Psoas muscle (tissue), 8 donors: ENCODE measurements at regions of chr11 and their contacts with region 1.

Region 1: DNA sequence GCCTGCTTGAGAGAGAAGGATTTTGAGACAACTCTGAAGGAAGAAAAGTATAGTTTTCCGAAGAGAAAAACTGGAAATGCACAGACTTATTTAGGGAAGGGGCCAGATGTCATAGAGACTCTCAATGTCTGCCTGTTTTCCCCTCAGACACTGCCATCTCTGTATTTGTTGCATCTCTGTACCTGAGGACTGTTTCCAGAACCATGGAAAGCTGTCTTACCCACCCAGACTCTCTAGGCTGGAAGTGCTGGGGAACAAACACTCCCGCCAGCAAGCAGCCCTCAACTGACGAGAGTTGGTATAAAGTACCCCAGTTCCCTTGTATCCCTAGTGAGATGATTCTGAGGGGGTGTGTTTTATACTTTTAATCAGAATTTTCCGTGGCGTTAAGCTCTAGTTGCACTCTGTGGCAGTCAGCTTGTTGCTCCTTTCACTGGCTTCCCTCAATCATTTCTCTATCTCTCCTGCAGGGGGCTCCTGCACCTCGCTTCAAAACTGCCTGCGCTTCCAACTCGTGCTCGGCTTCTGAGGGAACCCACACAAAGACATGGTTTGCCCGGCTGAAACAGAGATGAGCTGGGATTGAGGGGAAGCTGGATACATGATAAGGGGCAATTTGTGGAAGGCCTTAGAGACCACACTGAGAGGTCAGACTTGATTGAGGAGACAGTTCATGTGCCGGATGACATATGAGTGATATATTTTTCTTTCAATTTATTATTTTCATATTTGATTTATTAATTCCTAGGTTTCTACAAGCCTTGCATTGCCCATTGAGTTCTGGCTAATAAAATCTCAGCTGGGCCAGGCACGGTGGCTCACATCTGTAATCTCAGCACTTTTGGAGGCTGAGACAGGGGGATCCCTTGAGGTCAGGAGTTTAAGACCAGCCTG is 36.9 kb upstream of the CLPB start:
- DNase-seq: peak; percentile 51 to 71
- ATAC-seq: peak; percentile 75 to 84 (median 78)
- H3K4me3 ChIP-seq: no peak overlapping the region
- H3K27ac ChIP-seq: no peak overlapping the region
- H3K4me1 ChIP-seq: peaks cover 6% of the 10 kb centered on the region
- H3K27me3 ChIP-seq: no peaks in the 10 kb centered on the region
- CTCF ChIP-seq: peak; percentile 85

Region 2: DNA sequence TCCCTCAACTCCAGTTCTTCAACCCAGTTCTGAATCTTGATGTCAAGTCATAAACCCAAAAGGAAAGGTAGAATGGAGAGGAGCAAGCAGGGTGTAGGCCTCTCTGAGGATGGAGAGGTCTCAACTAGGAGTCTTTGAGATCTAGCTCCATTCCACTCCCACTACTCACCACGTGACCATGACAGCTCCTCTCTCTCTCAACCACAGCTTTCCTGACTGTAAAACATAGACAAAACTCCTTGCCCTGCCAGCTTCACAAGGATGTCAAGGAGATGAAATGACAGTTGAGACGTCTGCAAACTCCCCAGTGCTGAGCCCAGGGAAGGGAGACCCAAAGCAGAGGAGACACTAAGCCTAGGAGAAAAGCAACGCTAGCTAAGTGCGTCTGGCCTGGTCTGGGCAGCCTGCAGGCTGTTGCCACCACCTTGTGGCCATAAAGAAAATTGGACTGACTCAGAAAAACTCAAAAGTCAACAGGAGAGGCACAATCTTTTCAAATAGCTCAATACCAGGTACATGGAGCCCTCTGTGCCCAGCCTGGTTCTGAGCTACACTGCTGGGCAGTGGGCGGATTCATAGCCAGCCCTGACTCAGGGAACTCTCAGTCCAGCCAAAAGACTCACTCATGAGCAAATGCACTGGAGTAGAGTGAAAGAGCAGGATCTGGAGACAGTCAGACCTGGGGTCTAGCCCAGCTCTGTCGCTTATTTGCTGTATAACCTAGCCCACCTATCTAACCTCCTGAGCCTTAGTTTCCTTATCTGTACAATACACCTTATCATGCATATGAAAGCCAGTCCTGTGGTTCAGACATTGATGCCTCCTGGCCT is 40.3 kb before region 1 on chr11:
- intact Hi-C with region 1: no loop called
- DNase-seq: no peak
- ATAC-seq: no peak
- H3K4me3 ChIP-seq: no peak overlapping the region
- H3K27ac ChIP-seq: no peak overlapping the region
- H3K4me1 ChIP-seq: peaks cover 22% of the 10 kb centered on the region
- H3K27me3 ChIP-seq: no peaks in the 10 kb centered on the region
- CTCF ChIP-seq: peak; percentile 76

Region 3: DNA sequence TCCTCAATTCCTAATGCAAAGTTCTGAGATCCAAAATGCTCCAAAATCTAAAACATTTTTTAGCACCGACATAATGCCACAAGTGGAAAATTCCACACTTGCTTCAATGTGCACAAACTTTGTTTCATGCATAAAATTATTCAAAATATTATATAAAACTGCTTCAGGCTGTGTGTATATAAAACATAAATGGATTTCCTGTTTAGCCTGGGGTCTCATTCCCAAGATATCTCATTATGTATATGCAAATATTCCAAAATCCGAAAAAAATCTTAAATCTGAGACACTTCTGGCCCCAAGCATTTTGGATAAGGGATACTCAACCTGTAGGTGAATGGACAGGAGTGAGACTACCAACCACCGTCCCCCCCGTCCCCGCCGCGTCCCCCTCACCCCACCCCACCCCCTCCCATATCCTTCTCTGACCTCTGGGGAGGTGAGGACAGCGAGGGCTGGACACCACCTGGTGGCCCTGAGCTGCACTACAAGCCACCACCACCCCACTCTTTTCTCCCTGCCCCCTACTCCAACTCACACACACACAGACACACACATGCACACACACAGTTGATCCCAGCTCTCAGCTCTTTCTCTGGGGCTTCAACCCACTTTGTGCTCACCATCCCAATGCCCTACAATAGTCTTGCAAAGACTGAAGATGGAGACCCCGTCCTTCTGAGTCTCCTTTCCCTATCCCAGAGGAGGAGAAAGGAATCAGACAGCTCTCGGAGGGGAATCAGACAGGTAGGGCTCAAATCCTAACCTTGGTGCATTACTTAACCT is 102.0 kb after region 1 on chr11:
- intact Hi-C with region 1: loop called in 1 of 2 experiments (anchors 5 kb)
- DNase-seq: no peak
- ATAC-seq: peak; percentile 68 to 82 (median 77)
- H3K4me3 ChIP-seq: no peak overlapping the region
- H3K27ac ChIP-seq: no peak overlapping the region
- H3K4me1 ChIP-seq: no peaks in the 10 kb centered on the region
- H3K27me3 ChIP-seq: peaks cover 0 to 2% (median 0%) of the 10 kb centered on the region in 3 donors
- CTCF ChIP-seq: peak; percentile 48

Region 4: DNA sequence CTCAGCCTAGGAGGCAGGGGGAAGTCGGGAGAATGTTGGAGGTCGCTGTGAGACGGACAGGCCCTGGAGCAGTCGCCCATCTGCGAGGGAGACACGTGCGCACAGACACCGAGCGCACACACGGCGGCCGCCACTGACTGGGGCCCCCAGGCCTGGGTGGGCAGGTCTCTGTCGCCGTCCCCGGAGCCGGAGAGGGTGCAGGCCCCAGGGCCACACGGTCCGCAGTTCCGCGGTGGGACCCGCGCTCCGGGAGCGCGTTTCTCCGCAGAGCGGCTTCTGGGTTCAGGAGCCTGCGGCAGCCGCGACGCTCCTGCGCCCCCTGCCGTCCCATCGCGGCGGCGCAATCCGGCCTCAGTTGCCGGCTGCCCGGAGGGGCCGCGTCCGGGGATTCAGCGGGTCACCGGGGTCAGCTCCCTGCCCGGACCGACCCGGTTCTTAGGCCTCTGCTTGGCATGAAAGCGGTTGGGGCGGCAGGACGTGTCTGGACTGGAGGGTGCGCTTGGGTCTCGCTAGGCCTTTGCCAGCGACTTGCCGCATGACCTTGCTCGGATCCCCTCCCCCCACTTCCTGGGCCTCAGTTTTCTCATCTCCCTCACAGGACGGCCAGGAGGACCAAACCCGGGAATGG is 171.7 kb after region 1 on chr11:
- intact Hi-C with region 1: loop called in 1 of 2 experiments (anchors 10 kb)
- DNase-seq: peak; percentile 68 to 80
- ATAC-seq: peak; percentile 79 to 91 (median 87)
- H3K4me3 ChIP-seq: peak overlapping the region; percentile 72
- H3K27ac ChIP-seq: peak overlapping the region; percentile 46
- H3K4me1 ChIP-seq: peaks cover 7% of the 10 kb centered on the region
- H3K27me3 ChIP-seq: peaks cover 0 to 17% (median 0%) of the 10 kb centered on the region in 3 donors
- CTCF ChIP-seq: peak; percentile 98

Region 5: GRCh38 chr11:72683782-72684200 is 212.5 kb after region 1 on chr11:
- intact Hi-C with region 1: loop called (anchors 5 to 10 kb)
- DNase-seq: peak; percentile 71 to 82
- ATAC-seq: peak; percentile 61 to 81 (median 74)
- H3K4me3 ChIP-seq: no peak overlapping the region
- H3K27ac ChIP-seq: no peak overlapping the region
- H3K4me1 ChIP-seq: peaks cover 9% of the 10 kb centered on the region
- H3K27me3 ChIP-seq: peaks cover 0 to 5% (median 3%) of the 10 kb centered on the region in 3 donors
- CTCF ChIP-seq: peak; percentile 92